ENCODE measurements at regions of chr12 and their contacts with region 1.

Region 1: DNA sequence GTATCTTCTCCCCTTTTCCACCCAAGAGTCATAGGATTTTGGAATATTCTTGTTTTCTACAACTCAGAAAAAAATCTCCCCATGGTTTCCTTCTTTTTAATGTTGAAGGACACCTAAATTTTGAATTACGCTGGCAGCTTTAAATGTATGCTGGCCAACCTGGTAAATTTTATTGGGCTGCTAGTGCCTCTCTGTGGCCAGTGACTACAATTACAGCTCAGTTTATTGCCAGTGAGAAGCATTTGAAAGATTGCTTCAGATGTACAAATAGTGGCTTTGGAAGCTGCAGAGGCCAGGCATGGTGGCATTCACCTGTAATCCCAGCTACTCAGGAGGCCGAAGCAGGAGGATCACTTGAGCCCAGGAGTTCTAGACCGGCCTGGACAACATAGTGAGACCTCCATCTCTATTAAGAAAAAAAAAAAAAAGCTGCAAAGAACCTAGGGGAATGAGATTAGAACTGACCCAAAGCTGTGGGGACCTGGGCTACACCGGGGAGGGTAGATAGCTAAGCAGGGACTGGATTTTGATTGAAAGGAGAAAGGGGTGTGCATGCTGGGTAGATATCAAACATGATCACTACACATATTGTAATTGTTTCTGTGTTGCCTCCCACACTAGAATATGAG is 7.6 kb upstream of the RAB21 start:
- DNase-seq: peak; percentile 46
- H3K4me3 ChIP-seq: no peak overlapping the region
- H3K27ac ChIP-seq: no peak overlapping the region
- H3K4me1 ChIP-seq: peaks cover 0 to 6% (median 2%) of the 10 kb centered on the region in 4 donors
- H3K27me3 ChIP-seq: no peaks in the 10 kb centered on the region
- CTCF ChIP-seq: peak; percentile 65 to 83 (median 73)
- EP300 ChIP-seq: no peak
- POLR2A ChIP-seq: no peak

Region 2: GRCh38 chr12:71415336-71416231 is 331.5 kb before region 1 on chr12:
- in situ Hi-C with region 1: loop called (anchors 10 to 25 kb)
- intact Hi-C with region 1: loop called (anchors 10 kb)
- DNase-seq: peak; percentile 11
- H3K4me3 ChIP-seq: no peak overlapping the region
- H3K27ac ChIP-seq: no peak overlapping the region
- H3K4me1 ChIP-seq: peaks cover 0 to 2% (median 0%) of the 10 kb centered on the region in 4 donors
- H3K27me3 ChIP-seq: no peaks in the 10 kb centered on the region
- CTCF ChIP-seq: peak; percentile 59 to 75 (median 63)
- EP300 ChIP-seq: no peak
- POLR2A ChIP-seq: no peak

Region 3: DNA sequence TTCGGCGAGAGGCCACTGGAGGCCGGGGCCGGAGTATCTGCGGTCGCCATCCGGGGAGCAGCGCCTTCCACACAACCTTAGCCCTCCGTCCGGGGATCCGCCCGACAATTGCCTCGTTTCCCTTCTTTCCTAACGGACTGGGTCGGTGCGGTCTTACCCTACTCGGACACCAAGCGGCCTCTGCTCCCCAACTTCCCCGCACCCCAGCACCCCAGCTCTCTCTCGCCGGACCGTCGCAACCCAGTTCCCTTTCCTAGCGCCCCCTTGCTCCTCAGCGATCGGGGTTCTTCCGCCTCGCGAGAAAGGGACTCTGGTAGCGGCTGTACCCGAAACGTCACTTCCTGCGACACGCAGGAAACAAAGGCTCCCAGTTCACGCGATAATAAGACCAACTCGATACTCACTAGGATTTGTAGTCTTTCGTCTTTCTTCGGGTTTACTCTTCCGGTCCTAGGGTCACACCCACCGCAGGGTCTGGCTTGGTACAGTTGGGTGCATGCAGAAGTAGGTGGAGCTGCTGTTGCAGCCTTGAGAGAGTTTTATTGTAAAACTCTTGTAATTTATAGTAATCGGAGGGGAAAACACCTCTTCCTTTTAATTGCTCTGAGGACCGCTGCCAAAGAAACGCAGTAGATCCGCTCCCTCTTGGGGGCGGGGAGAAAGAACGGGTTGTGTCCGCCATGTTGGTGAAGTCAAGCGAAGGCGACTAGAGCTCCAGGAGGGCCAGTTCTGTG is 83.4 kb before region 1 on chr12 and contains the start of gene ZFC3H1:
- in situ Hi-C with region 1: no loop called
- intact Hi-C with region 1: loop called (anchors 10 kb)
- DNase-seq: peak; percentile 94
- H3K4me3 ChIP-seq: peak within 1 kb of the TSS; percentile 67 to 85 (median 76)
- H3K27ac ChIP-seq: peak within 1 kb of the TSS; percentile 97 to 99 (median 98)
- H3K4me1 ChIP-seq: peaks cover 14 to 36% (median 23%) of the 10 kb centered on the region in 4 donors
- H3K27me3 ChIP-seq: no peaks in the 10 kb centered on the region
- CTCF ChIP-seq: peak in 1 of 5 experiments; percentile 26
- EP300 ChIP-seq: no peak
- POLR2A ChIP-seq: peak; percentile 99
- total RNA-seq, gene ZFC3H1: 61.9 to 141 (median 91.6) TPM

Region 4: DNA sequence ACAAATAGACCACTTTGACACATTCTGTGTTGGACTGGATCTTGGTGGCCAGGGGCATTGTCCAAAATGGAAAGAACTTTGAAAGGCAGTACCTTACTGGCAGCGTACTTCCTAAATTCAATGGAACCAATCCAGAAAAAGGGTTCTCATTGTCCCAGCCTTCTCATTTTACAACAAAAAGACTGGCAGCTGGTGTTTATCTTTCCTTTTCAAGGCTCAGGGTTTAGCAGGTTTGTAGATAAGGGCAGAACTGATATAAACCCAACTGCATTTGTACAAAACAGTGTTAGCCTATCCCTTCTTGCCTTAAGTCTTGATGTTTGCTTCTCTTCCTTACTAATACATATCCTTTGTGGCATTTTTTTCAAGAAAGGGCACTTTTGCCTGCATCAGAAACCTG is 75.3 kb before region 1 on chr12:
- in situ Hi-C with region 1: loop called in 1 of 4 experiments (anchors 10 kb)
- intact Hi-C with region 1: loop called (anchors 10 kb)
- DNase-seq: no peak
- H3K4me3 ChIP-seq: no peak overlapping the region
- H3K27ac ChIP-seq: no peak overlapping the region
- H3K4me1 ChIP-seq: peaks cover 0 to 7% (median 0%) of the 10 kb centered on the region in 4 donors
- H3K27me3 ChIP-seq: no peaks in the 10 kb centered on the region
- CTCF ChIP-seq: no peak
- EP300 ChIP-seq: no peak
- POLR2A ChIP-seq: no peak

Measured in transverse colon (tissue), 4 donors.